ENCODE measurements at regions of chr17 and their contacts with region 1.

Region 1: GRCh38 chr17:78013683-78014467 is 55.4 kb downstream of the TNRC6C start:
- DNase-seq: peak; percentile 67
- ATAC-seq: peak; percentile 87

Region 2: GRCh38 chr17:77772461-77772897 is 241.4 kb before region 1 on chr17:
- intact Hi-C with region 1: loop called (anchors 10 kb)
- DNase-seq: peak; percentile 83
- ATAC-seq: peak; percentile 88

Region 3: DNA sequence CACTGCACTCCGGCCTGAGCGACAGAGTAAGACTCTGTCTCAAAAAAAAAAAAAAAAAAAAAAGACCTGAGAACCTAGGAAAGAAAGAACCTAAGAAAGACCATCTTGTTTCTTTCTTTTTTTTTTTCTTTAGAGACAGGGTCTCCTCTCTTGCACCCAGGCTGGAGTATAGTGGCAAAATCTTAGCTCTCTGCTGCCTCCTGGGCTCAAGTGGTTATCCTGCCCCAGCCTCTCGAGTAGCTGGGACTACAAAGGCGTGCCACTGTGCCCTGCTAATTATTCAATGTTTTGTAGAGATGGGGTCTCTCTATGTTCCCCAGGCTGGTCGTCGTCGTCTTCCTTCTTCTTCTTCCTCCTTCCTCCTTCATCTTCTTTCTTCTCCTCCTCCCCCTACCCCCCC is 192.4 kb after region 1 on chr17:
- intact Hi-C with region 1: no loop called
- DNase-seq: no peak
- ATAC-seq: no peak